Naive thymus-derived CD4-positive, alpha-beta T cell (primary cell): ENCODE measurements at regions of chr1 and their contacts with region 1.

Region 1: GRCh38 chr1:40862008-40862863 is at the start of gene CITED4:
- DNase-seq: peak; percentile 91 to 96 (median 95)
- ATAC-seq: peak; percentile 98
- H3K4me3 ChIP-seq: peak within 1 kb of the TSS; percentile 70
- H3K4me3 Mint-ChIP-seq: peak within 1 kb of the TSS; percentile 93 to 100 (median 96)
- H3K27ac ChIP-seq: peak within 1 kb of the TSS; percentile 73
- H3K27ac Mint-ChIP-seq: peak within 1 kb of the TSS; percentile 96 to 99 (median 99)
- H3K4me1 ChIP-seq: peaks cover 10 to 12% of the 10 kb centered on the region in 2 donors
- H3K4me1 Mint-ChIP-seq: peaks cover 11 to 31% (median 13%) of the 10 kb centered on the region in 7 donors
- H3K27me3 ChIP-seq: no peaks in the 10 kb centered on the region
- H3K27me3 Mint-ChIP-seq: peaks cover 0 to 26% (median 0%) of the 10 kb centered on the region in 5 donors
- total RNA-seq, gene CITED4: 20.5 to 42.8 (median 21.5) TPM

Region 2: GRCh38 chr1:40531381-40532061 is 330.7 kb before region 1 on chr1 and contains the start of gene ZNF684:
- CTCF ChIA-PET with region 1: no interaction called
- POLR2A ChIA-PET with region 1: interaction called, 8 read pairs
- intact Hi-C with region 1: loop called in 1 of 2 experiments (anchors 1 kb)
- DNase-seq: peak; percentile 57 to 87 (median 81)
- ATAC-seq: peak; percentile 99
- H3K4me3 ChIP-seq: peak within 1 kb of the TSS; percentile 78
- H3K4me3 Mint-ChIP-seq: peak within 1 kb of the TSS; percentile 89 to 100 (median 98)
- H3K27ac ChIP-seq: peak within 1 kb of the TSS; percentile 80
- H3K27ac Mint-ChIP-seq: peak within 1 kb of the TSS; percentile 59 to 96 (median 93)
- H3K4me1 ChIP-seq: peaks cover 14 to 17% of the 10 kb centered on the region in 2 donors
- H3K4me1 Mint-ChIP-seq: peaks cover 22 to 29% (median 25%) of the 10 kb centered on the region in 7 donors
- H3K27me3 ChIP-seq: no peaks in the 10 kb centered on the region
- H3K27me3 Mint-ChIP-seq: peaks cover 4 to 24% (median 17%) of the 10 kb centered on the region in 5 donors
- total RNA-seq, gene ZNF684: 1.3 to 6.6 (median 3.7) TPM

Region 3: GRCh38 chr1:40796939-40797667 is 65.1 kb before region 1 on chr1:
- CTCF ChIA-PET with region 1: no interaction called
- POLR2A ChIA-PET with region 1: interaction called, 17 read pairs
- intact Hi-C with region 1: loop called (anchors 1 kb)
- DNase-seq: no peak
- ATAC-seq: no peak
- H3K4me3 ChIP-seq: peak overlapping the region; percentile 10
- H3K4me3 Mint-ChIP-seq: peak overlapping the region; percentile 51 to 87 (median 66)
- H3K27ac ChIP-seq: no peak overlapping the region
- H3K27ac Mint-ChIP-seq: peak overlapping the region; percentile 32 to 90 (median 70)
- H3K4me1 ChIP-seq: peaks cover 17 to 29% of the 10 kb centered on the region in 2 donors
- H3K4me1 Mint-ChIP-seq: peaks cover 22 to 60% (median 55%) of the 10 kb centered on the region in 7 donors
- H3K27me3 ChIP-seq: no peaks in the 10 kb centered on the region
- H3K27me3 Mint-ChIP-seq: peaks cover 0 to 5% (median 0%) of the 10 kb centered on the region in 5 donors

Region 4: GRCh38 chr1:40849801-40850592 is 12.2 kb before region 1 on chr1:
- CTCF ChIA-PET with region 1: interaction called, 7 read pairs
- POLR2A ChIA-PET with region 1: interaction called, 13 read pairs
- intact Hi-C with region 1: no loop called
- DNase-seq: peak; percentile 63 to 87 (median 77)
- ATAC-seq: peak; percentile 98
- H3K4me3 ChIP-seq: no peak overlapping the region
- H3K4me3 Mint-ChIP-seq: peak overlapping the region; percentile 12 to 73 (median 60)
- H3K27ac ChIP-seq: no peak overlapping the region
- H3K27ac Mint-ChIP-seq: peak overlapping the region in 6 of 9 donors; percentile 54 to 78 (median 72)
- H3K4me1 ChIP-seq: peaks cover 0 to under 1% of the 10 kb centered on the region in 2 donors
- H3K4me1 Mint-ChIP-seq: peaks cover 0 to 34% (median 23%) of the 10 kb centered on the region in 7 donors
- H3K27me3 ChIP-seq: no peaks in the 10 kb centered on the region
- H3K27me3 Mint-ChIP-seq: no peaks in the 10 kb centered on the region

Region 5: GRCh38 chr1:41003640-41004220 is 141.5 kb after region 1 on chr1:
- CTCF ChIA-PET with region 1: no interaction called
- POLR2A ChIA-PET with region 1: no interaction called
- intact Hi-C with region 1: loop called in 1 of 2 experiments (anchors 1 kb)
- DNase-seq: peak; percentile 52 to 90 (median 85)
- ATAC-seq: peak; percentile 99
- H3K4me3 ChIP-seq: no peak overlapping the region
- H3K4me3 Mint-ChIP-seq: peak overlapping the region in 7 of 10 donors; percentile 17 to 59 (median 36)
- H3K27ac ChIP-seq: peak overlapping the region; percentile 5
- H3K27ac Mint-ChIP-seq: peak overlapping the region in 8 of 9 donors; percentile 22 to 79 (median 60)
- H3K4me1 ChIP-seq: peaks cover 9 to 12% of the 10 kb centered on the region in 2 donors
- H3K4me1 Mint-ChIP-seq: peaks cover 12 to 26% (median 22%) of the 10 kb centered on the region in 7 donors
- H3K27me3 ChIP-seq: no peaks in the 10 kb centered on the region
- H3K27me3 Mint-ChIP-seq: no peaks in the 10 kb centered on the region

Region 6: DNA sequence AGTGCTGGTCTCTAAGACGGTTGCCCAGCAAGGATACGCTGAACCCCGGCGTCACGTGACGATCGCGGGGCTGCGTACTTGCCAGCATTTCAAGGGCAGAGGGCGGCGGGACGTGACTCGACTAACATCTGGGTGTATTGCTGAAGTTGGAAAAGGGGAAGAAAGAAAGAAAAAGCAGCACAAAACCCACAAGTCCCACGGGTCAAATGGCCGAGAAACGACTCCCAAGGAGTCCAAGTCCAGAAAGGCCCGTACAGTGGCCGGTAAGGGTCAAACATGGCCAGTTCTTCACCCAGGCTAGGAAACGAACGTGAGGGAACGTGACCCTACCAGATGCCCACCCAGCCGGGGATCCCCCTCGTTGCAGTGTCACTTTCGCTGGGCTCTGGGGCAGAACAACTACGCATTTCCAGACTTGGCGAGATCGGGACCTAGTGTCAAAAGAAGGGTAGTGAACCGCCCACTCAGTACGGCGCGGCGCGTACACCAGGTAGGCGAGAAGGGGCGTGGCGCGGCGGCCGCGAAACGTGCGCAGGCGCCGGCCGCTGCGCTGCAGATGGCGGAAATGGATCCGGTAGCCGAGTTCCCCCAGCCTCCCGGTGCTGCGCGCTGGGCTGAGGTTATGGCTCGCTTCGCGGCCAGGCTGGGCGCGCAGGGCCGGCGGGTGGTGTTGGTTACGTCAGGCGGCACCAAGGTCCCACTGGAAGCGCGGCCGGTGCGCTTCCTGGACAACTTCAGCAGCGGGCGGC is 1593.9 kb after region 1 on chr1 and contains the starts of genes PPCS and ZMYND12:
- CTCF ChIA-PET with region 1: no interaction called
- POLR2A ChIA-PET with region 1: no interaction called
- intact Hi-C with region 1: loop called in 1 of 2 experiments (anchors 2 kb)
- DNase-seq: peak; percentile 84 to 94 (median 92)
- ATAC-seq: peak; percentile 95
- H3K4me3 ChIP-seq: peak within 1 kb of the TSS; percentile 100
- H3K4me3 Mint-ChIP-seq: peak within 1 kb of the TSS; percentile 85 to 99 (median 96)
- H3K27ac ChIP-seq: peak within 1 kb of the TSS; percentile 91
- H3K27ac Mint-ChIP-seq: peak within 1 kb of the TSS; percentile 95 to 100 (median 98)
- H3K4me1 ChIP-seq: peaks cover 17 to 23% of the 10 kb centered on the region in 2 donors
- H3K4me1 Mint-ChIP-seq: peaks cover 23 to 53% (median 40%) of the 10 kb centered on the region in 7 donors
- H3K27me3 ChIP-seq: no peaks in the 10 kb centered on the region
- H3K27me3 Mint-ChIP-seq: peaks cover 0 to under 1% (median 0%) of the 10 kb centered on the region in 5 donors
- total RNA-seq, gene PPCS: 45.4 to 78.4 (median 50.0) TPM
- total RNA-seq, gene ZMYND12: 0.44 to 1.2 (median 1.1) TPM